ENCODE measurements at regions of chr1 and their contacts with region 1.

Region 1: DNA sequence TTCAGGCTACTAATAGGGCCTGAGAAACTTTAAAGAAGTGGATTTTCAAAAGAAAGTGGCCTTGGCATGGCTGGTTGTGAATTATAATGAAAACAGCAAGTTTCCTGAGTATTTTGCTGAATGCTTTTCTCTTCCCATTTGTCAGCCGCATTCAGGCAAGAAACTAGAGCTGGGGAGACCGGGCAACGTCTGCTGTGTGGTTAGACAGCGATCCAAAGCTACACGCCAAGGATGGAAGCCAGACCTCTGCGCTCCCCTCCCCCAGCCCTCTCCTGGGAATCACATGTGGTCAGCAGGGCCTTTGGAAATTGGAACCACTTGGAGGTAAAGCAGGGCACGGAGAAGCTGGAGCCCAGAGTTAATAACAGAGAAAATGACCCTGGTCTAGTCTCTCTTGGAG is 114.1 kb upstream of the CD34 start:
- DNase-seq: no peak
- ATAC-seq: no peak
- H3K4me3 ChIP-seq: no peak overlapping the region
- H3K27ac ChIP-seq: no peak overlapping the region
- H3K4me1 ChIP-seq: no peaks in the 10 kb centered on the region
- H3K27me3 ChIP-seq: no peaks in the 10 kb centered on the region; the same call in 1 of the 2 replicates
- CTCF ChIP-seq: no peak

Region 2: GRCh38 chr1:207910591-207911354 is 114.3 kb before region 1 on chr1 and contains the start of gene CD34:
- CTCF ChIA-PET with region 1: interaction called, 15 read pairs
- POLR2A ChIA-PET with region 1: no interaction called
- in situ Hi-C with region 1: no loop called
- intact Hi-C with region 1: no loop called
- DNase-seq: no peak
- ATAC-seq: peak; percentile 74
- H3K4me3 ChIP-seq: peak within 1 kb of the TSS; percentile 21 to 33
- H3K27ac ChIP-seq: no peak within 1 kb of the TSS
- H3K4me1 ChIP-seq: no peaks in the 10 kb centered on the region
- H3K27me3 ChIP-seq: peaks cover 13% of the 10 kb centered on the region
- CTCF ChIP-seq: no peak
- total RNA-seq, gene CD34: 0.15 TPM

Region 3: GRCh38 chr1:208093754-208094719 is 69.0 kb after region 1 on chr1:
- CTCF ChIA-PET with region 1: interaction called, 3 read pairs
- POLR2A ChIA-PET with region 1: interaction called, 4 read pairs
- in situ Hi-C with region 1: no loop called
- intact Hi-C with region 1: loop called (anchors 5 kb)
- DNase-seq: peak; percentile 17
- ATAC-seq: peak; percentile 83
- H3K4me3 ChIP-seq: no peak overlapping the region
- H3K27ac ChIP-seq: no peak overlapping the region
- H3K4me1 ChIP-seq: no peaks in the 10 kb centered on the region
- H3K27me3 ChIP-seq: no peaks in the 10 kb centered on the region
- CTCF ChIP-seq: peak; percentile 83

Region 4: GRCh38 chr1:208184991-208185654 is 160.1 kb after region 1 on chr1:
- CTCF ChIA-PET with region 1: interaction called, 12 read pairs
- POLR2A ChIA-PET with region 1: no interaction called
- in situ Hi-C with region 1: no loop called
- intact Hi-C with region 1: no loop called
- DNase-seq: no peak
- ATAC-seq: no peak
- H3K4me3 ChIP-seq: no peak overlapping the region
- H3K27ac ChIP-seq: no peak overlapping the region
- H3K4me1 ChIP-seq: no peaks in the 10 kb centered on the region
- H3K27me3 ChIP-seq: no peaks in the 10 kb centered on the region
- CTCF ChIP-seq: no peak

Region 5: GRCh38 chr1:208245185-208245705 is 220.2 kb after region 1 on chr1:
- CTCF ChIA-PET with region 1: interaction called, 7 read pairs
- POLR2A ChIA-PET with region 1: no interaction called
- in situ Hi-C with region 1: no loop called
- intact Hi-C with region 1: loop called (anchors 1 kb)
- DNase-seq: peak; percentile 57
- ATAC-seq: peak; percentile 74
- H3K4me3 ChIP-seq: peak overlapping the region in 1 of 2 experiments; percentile 50; a peak in 3 of 4 replicates
- H3K27ac ChIP-seq: no peak overlapping the region
- H3K4me1 ChIP-seq: peaks cover 11% of the 10 kb centered on the region
- H3K27me3 ChIP-seq: peaks cover 33% of the 10 kb centered on the region
- CTCF ChIP-seq: peak; percentile 85

Measured in Panc1 (cell line).